ENCODE measurements at regions of chr1 and their contacts with region 1.

Region 1: DNA sequence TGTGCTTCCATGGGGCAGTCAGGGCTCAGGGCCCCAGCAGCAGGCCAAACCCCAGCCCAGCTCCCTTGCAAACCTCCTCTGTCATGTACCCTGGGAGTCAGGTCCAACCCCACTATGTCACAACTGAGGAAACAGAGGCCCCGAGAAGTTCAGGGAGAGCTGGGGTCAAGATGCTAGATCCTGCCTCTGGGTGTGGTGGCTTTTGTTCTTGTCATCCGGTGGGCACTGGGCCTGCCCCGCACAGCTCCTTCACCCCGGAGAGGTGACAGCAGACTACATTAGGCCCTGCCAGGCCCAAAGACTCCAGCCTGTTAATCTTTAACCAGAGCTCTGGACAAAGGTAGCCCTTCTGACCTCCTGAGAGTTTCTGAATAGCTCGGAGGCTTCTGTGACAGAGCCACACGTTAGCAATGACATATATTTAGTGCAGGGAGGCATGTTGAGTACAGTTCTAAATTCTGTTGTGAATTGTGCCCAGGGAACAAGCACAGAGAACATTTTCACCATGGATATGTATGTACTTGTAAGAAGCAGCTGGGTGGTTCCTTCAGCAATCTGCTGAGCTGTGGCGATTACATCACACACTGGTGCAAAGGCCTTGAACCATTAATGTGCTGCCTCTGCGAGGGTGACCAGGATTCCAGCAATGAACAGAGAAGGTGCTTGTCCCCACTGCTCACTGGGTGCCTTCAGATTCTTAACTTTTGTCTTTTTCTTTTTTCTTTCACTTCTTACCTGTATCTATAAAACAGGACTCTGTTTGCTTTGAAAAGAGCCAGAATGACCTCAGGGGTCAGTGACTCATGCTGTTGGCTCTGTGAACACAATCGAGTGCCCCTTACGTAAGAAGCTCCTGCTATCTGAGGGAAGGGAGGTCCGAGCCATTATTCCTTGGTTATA is 102.8 kb downstream of the RHOU start:
- DNase-seq: peak; percentile 96
- H3K4me3 ChIP-seq: no peak overlapping the region
- H3K27ac ChIP-seq: peak overlapping the region; percentile 60
- H3K4me1 ChIP-seq: peaks cover 28% of the 10 kb centered on the region
- H3K27me3 ChIP-seq: no peaks in the 10 kb centered on the region
- CTCF ChIP-seq: no peak
- POLR2A ChIP-seq: no peak

Region 2: DNA sequence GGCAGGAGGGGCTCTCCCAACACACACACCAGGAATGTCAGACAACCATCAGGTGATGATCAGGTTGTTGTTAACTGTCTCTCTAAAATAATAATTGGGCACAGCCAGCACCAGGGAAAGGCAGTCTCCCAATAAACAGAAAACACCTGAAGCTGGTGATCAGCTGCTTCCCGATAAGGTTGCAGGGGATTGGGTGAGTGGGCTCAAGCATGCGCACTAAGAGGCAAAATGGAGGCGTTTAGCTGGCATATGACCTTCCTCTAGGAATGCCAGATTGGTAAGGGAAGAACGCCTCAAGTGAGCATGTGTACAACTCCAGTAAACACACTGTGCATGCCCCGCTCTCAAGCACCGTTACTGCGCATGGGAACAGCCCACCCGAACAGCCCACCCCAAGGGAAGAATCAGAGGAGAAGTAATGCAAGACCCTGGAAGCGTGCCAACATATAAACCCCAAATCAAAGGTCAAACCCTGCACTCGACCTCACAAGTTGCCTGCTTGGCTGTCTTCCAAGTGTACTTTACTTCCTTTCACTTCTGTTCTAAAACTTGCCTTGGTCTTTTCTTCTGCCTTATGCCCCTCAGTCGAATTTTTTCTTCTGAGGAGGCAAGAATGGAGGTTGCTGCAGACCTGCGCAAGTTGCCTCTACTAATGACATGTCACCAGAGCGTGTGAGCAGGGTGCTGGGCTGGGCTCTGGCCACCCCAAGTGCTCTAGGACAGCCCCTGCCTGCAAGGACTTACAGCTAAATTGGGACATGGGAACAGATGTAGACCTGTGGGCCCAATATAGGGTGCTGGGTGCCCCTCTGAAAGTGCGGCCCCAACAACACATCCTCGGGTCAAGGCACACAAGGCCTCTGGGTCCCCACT is 98.0 kb after region 1 on chr1:
- CTCF ChIA-PET with region 1: no interaction called
- POLR2A ChIA-PET with region 1: no interaction called
- dilution Hi-C with region 1: no loop called
- intact Hi-C with region 1: no loop called
- DNase-seq: no peak
- H3K4me3 ChIP-seq: no peak overlapping the region
- H3K27ac ChIP-seq: no peak overlapping the region
- H3K4me1 ChIP-seq: peaks cover 4% of the 10 kb centered on the region
- H3K27me3 ChIP-seq: peaks cover 0 to 1% of the 10 kb centered on the region in 2 experiments
- CTCF ChIP-seq: no peak
- POLR2A ChIP-seq: no peak

Region 3: GRCh38 chr1:229024528-229025130 is 186.6 kb after region 1 on chr1:
- CTCF ChIA-PET with region 1: no interaction called
- POLR2A ChIA-PET with region 1: no interaction called
- dilution Hi-C with region 1: no loop called
- intact Hi-C with region 1: loop called (anchors 5 kb)
- DNase-seq: peak; percentile 55
- H3K4me3 ChIP-seq: no peak overlapping the region
- H3K27ac ChIP-seq: no peak overlapping the region
- H3K4me1 ChIP-seq: peaks cover 15% of the 10 kb centered on the region
- H3K27me3 ChIP-seq: no peaks in the 10 kb centered on the region
- CTCF ChIP-seq: no peak
- POLR2A ChIP-seq: no peak

Measured in endothelial cell of umbilical vein (primary cell).